Breast epithelium (tissue), 4 donors: ENCODE measurements at regions of chr11 and their contacts with region 1.

Region 1: GRCh38 chr11:68168694-68169093 is 44.4 kb downstream of the KMT5B start:
- DNase-seq: no peak
- H3K4me3 ChIP-seq: no peak overlapping the region
- H3K27ac ChIP-seq: no peak overlapping the region
- H3K4me1 ChIP-seq: no peaks in the 10 kb centered on the region
- H3K27me3 ChIP-seq: no peaks in the 10 kb centered on the region
- CTCF ChIP-seq: no peak
- POLR2A ChIP-seq: no peak

Region 2: DNA sequence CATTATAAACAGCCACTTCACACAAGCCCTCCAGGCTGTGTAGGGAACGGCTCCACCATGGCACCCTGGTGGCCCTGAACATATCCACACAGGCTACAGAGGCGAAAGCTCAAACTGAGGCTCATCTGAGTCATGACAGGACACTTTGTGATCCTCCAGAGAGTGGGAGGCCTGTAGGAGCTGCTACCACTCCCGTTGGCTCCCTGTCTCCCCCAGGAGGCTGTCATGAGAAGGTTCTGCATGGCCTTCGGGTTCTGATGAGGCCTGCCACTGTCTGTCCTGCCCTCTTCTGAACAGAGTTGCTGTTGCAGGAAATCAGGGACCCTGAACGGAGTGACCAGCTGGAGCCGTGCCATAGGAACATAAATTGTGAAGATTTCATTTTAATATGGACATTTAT is 470.4 kb before region 1 on chr11:
- intact Hi-C with region 1: loop called (anchors 5 kb)
- DNase-seq: no peak
- H3K4me3 ChIP-seq: no peak overlapping the region
- H3K27ac ChIP-seq: no peak overlapping the region
- H3K4me1 ChIP-seq: no peaks in the 10 kb centered on the region
- H3K27me3 ChIP-seq: no peaks in the 10 kb centered on the region
- CTCF ChIP-seq: no peak
- POLR2A ChIP-seq: no peak

Region 3: DNA sequence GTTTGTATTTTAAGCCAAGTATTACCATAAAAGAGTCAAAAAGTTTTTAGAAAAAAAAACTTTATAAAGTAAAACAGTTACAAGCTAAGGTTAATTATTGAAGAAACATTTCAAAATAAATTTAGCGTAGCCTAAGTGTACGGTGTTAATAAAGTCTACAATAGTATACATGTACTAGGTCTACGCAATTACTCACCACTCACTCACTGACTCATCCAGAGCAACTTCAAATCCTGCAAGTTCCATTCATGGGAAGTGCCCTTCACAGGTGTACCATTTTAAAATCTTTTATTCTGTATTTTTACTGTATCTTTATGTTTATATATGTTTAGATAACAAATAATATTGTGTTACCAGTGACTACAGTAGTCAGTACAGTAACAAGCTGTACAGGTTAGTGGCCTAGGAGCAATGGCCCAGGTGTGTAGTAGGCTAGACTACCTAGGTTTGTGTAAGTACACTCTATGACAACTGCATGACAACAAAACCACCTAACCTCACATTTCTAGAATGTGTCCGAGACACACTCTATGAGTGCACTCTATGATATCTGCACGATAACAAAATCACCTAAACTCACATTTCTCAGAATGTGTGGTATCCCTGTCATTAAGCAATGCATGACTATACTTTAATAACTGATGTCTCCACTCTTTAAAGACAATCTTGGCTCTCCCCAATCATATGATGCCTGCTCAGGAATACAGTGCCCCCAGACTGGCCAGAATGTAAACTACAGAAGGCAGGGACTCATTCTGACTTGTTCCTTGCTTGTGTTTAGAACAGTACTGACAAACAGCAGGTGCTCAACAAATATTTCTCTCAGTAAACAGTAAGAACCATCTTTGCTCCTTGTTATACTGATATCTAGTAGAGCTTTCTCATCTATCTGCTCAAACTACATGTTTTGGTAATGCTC is 23.2 kb after region 1 on chr11:
- intact Hi-C with region 1: no loop called
- DNase-seq: no peak
- H3K4me3 ChIP-seq: no peak overlapping the region
- H3K27ac ChIP-seq: no peak overlapping the region
- H3K4me1 ChIP-seq: peaks cover 0 to 5% of the 10 kb centered on the region in 2 donors
- H3K27me3 ChIP-seq: no peaks in the 10 kb centered on the region
- CTCF ChIP-seq: no peak
- POLR2A ChIP-seq: no peak